Adrenal gland (tissue), 19 donors: ENCODE measurements at regions of chr4 and their contacts with region 1.

Region 1: GRCh38 chr4:127732613-127733328 is 2.6 kb downstream of the SLC25A31 start:
- DNase-seq: no peak
- H3K4me3 ChIP-seq: no peak overlapping the region
- H3K27ac ChIP-seq: no peak overlapping the region
- H3K4me1 ChIP-seq: no peaks in the 10 kb centered on the region
- H3K27me3 ChIP-seq: peaks cover 3% of the 10 kb centered on the region
- CTCF ChIP-seq: peak; percentile 39 to 74 (median 66)
- POLR2A ChIP-seq: no peak

Region 2: GRCh38 chr4:127335073-127335620 is 397.6 kb before region 1 on chr4:
- intact Hi-C with region 1: no loop called
- DNase-seq: no peak
- H3K4me3 ChIP-seq: no peak overlapping the region
- H3K27ac ChIP-seq: no peak overlapping the region
- H3K4me1 ChIP-seq: no peaks in the 10 kb centered on the region
- H3K27me3 ChIP-seq: no peaks in the 10 kb centered on the region
- CTCF ChIP-seq: no peak
- POLR2A ChIP-seq: no peak

Region 3: DNA sequence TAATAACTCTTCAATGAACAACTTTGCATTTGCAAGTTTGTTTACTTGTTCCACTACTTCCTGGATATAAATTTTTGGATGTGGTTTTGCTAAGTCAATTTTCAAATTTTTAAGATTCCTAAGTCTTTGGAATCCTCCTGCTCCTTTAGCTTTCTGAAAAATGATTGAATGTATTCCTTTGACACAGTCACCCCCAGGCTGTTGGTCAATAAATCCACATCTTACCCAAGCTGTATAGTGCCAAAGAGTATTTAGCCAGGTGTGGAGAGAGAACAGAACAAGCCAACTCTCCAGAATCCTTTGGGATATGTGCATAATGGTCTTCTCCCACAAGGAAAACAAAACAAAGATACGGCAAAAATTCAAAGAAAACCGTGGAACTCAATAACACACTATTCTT is 156.9 kb before region 1 on chr4:
- intact Hi-C with region 1: no loop called
- DNase-seq: no peak
- H3K4me3 ChIP-seq: no peak overlapping the region
- H3K27ac ChIP-seq: no peak overlapping the region
- H3K4me1 ChIP-seq: no peaks in the 10 kb centered on the region
- H3K27me3 ChIP-seq: no peaks in the 10 kb centered on the region
- CTCF ChIP-seq: no peak
- POLR2A ChIP-seq: no peak

Region 4: GRCh38 chr4:127604949-127605709 is 127.6 kb before region 1 on chr4:
- intact Hi-C with region 1: loop called (anchors 2 to 5 kb)
- DNase-seq: no peak
- H3K4me3 ChIP-seq: no peak overlapping the region
- H3K27ac ChIP-seq: no peak overlapping the region
- H3K4me1 ChIP-seq: no peaks in the 10 kb centered on the region
- H3K27me3 ChIP-seq: peaks cover 3% of the 10 kb centered on the region
- CTCF ChIP-seq: peak; percentile 40 to 77 (median 62)
- POLR2A ChIP-seq: no peak